HEK293 (cell line): ENCODE measurements at regions of chr9 and their contacts with region 1.

Region 1: GRCh38 chr9:84397151-84397728 is 56.7 kb upstream of the SLC28A3 start:
- H3K4me3 ChIP-seq: no peak overlapping the region
- H3K27ac ChIP-seq: no peak overlapping the region
- H3K4me1 ChIP-seq: no peaks in the 10 kb centered on the region
- CTCF ChIP-seq: 0 out of 2 replicates have a peak, but pooled peaks have one; percentile 15

Region 2: DNA sequence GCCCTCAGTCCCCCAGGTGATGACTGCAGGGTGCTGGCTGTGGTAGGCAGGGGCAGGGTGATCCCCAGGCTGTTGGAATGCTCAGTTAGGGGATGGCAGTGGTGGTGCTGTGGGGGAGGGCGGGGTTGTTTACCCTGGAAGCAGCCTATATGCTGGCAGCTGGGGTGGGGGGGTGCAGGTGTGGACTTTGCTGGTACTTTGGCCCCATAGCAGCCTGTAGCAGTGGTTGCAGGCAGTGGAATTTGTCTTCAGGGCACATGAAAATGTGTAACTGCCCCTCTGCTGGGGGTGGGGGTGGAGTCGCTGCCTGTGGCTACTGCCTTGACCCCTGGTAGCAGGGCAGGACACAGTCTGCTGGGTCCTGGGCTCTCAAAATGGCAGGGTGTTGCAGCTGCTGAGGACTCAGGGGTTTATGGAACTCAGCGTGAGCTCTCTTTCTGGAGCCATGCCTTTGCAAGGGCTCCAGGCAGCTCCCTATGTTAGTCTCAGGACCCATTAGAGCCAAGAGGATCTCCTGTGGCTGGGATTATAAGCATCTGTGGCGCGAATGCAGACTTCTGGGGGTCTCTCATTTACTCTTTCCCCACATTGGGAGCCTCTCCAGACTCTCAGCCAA is 351.6 kb before region 1 on chr9:
- CTCF ChIA-PET with region 1: no interaction called
- POLR2A ChIA-PET with region 1: no interaction called
- H3K4me3 ChIP-seq: no peak overlapping the region
- H3K27ac ChIP-seq: no peak overlapping the region
- H3K4me1 ChIP-seq: no peaks in the 10 kb centered on the region
- CTCF ChIP-seq: no peak

Region 3: DNA sequence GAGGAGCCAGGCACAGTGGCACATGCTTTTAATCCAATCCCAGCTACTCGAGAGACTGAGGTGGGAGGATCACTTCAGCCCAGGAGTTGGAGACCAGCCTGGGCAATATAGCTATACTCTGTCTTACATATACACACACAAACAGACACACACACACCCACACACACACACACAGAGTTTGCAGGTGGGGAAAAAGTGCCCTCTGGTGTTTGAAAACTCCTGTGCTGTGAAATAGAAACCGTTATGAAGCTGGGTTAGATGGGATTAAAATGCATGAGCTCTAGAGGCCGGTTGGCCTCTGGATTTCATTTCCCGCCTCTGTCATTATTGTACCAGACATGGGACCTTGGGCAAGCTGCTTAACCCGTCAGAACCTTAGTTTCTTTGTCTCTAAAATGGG is 64.3 kb after region 1 on chr9:
- CTCF ChIA-PET with region 1: interaction called, 10 read pairs
- POLR2A ChIA-PET with region 1: no interaction called
- H3K4me3 ChIP-seq: no peak overlapping the region
- H3K27ac ChIP-seq: no peak overlapping the region
- H3K4me1 ChIP-seq: no peaks in the 10 kb centered on the region
- CTCF ChIP-seq: peak; percentile 18; the same call in 1 of the 2 replicates

Region 4: DNA sequence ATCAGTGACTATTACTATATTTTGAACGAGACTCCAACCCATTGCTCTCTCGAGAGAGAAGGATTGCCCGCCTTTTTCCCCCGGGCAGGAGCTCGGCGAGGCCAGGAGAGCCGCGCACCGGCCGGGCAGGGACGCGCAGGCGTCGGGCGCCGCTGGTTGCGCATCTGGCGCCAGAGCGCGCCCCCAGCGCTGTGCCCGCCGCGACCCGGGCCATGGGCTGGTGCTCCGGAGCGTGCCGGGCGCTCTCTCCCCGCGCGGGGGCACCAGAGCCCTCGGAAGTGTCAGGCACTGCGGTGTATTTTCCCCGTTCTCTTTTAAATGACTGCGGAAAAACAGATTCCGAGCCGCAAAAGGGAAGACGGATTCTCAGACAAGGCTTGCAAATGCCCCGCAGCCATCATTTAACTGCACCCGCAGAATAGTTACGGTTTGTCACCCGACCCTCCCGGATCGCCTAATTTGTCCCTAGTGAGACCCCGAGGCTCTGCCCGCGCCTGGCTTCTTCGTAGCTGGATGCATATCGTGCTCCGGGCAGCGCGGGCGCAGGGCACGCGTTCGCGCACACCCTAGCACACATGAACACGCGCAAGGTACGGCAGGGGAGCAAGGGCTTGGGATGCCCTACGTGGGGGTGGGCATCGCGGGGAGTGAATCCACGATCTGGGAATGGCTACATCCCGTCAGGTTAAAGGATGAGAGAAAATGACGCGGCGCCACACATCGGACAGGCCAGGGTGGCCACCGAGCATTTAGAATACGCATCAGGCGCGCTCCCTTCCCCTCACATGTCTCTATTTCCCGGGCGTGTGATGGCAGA is 271.2 kb after region 1 on chr9:
- CTCF ChIA-PET with region 1: interaction called, 10 read pairs
- POLR2A ChIA-PET with region 1: no interaction called
- H3K4me3 ChIP-seq: peak overlapping the region; percentile 58
- H3K27ac ChIP-seq: peak overlapping the region; percentile 5; the same call in 1 of the 2 replicates
- H3K4me1 ChIP-seq: no peaks in the 10 kb centered on the region
- CTCF ChIP-seq: peak; percentile 58; the same call in 1 of the 2 replicates